Activated CD8-positive, alpha-beta memory T cell treated with anti-CD3 and anti-CD28 coated beads, Interleukin-2, amount 10 ng/mL, durations not matched to agents 7 days and 5 days (primary cell): ENCODE measurements at regions of chr13 and their contacts with region 1.

Region 1: GRCh38 chr13:91375116-91375729 is 23.2 kb upstream of the GPC5 start:
- DNase-seq: no peak
- ATAC-seq: peak; percentile 76
- H3K4me3 Mint-ChIP-seq: no peak overlapping the region
- H3K27ac Mint-ChIP-seq: no peak overlapping the region
- H3K4me1 Mint-ChIP-seq: peaks cover 8% of the 10 kb centered on the region
- H3K27me3 Mint-ChIP-seq: peaks cover 7% of the 10 kb centered on the region

Region 2: DNA sequence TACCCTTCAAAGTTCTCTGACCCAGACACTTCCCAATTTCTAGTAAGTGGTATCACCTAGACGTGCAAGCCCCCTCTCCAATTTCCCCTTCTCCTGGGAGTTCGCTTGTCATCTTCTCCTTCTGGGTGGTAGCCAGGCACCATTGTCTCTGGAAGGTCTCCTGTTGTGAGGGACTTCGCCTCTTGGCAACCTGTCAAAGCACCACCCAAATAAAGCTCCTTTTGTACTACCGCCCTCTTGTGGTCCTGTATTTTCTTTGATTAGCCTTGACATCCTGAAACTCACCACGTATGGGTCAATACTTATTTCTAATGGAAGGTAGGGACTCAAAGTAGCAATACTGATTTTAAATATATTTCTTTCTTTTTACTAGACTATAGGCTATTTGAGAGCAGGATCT is 31.4 kb after region 1 on chr13:
- CTCF ChIA-PET with region 1: interaction called, 38 read pairs
- DNase-seq: peak; percentile 46
- ATAC-seq: peak; percentile 71
- H3K4me3 Mint-ChIP-seq: no peak overlapping the region
- H3K27ac Mint-ChIP-seq: no peak overlapping the region
- H3K4me1 Mint-ChIP-seq: no peaks in the 10 kb centered on the region
- H3K27me3 Mint-ChIP-seq: peaks cover 39% of the 10 kb centered on the region